ENCODE measurements at regions of chr4 and their contacts with region 1.

Region 1: DNA sequence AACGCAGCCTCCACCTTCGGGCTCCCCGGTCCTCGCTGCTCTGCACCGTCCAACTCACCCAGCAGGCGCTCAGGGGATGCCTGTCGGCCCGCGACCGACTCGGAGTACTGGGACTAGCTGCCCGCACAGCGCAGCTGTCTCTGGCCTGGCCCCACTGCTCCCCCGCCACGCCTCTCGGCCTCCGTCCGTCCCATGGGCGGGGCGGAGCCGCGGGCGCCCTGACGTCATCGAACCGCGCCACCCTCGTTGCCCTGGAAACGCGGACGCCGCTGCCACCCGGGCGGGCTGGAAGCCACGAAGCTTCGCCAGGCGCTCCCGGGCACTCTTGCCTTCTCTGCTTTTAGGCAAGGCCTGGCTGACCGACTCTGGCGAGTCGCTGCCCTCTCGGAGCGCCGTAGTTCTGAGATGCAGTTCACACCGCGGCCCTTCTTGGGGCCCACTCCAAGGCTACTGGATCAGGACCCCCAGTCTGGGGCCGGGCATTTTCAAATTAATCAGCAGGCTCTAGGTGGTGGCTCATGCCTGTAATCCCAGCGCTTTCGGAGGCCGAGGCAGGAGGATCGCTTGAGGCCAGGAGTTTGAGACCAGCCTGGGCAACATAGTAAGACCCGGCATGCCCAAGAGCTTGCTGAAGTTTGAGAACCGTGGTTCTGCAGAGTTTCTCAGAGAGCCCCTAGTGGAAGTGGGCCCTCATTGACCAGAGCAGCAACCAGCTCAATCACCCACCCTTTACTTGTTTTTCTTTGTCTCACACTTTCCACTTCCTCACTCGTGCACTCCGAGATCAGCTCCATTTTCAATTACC is 12.0 kb downstream of the ACOX3 start:
- DNase-seq: peak; percentile 93
- H3K4me3 Mint-ChIP-seq: peak overlapping the region; percentile 95
- H3K27ac Mint-ChIP-seq: peak overlapping the region; percentile 80
- H3K4me1 Mint-ChIP-seq: peaks cover 20% of the 10 kb centered on the region
- H3K27me3 Mint-ChIP-seq: no peaks in the 10 kb centered on the region

Region 2: GRCh38 chr4:8440492-8441341 is 12.2 kb after region 1 on chr4 and contains the starts of genes ACOX3 and TRMT44:
- CTCF ChIA-PET with region 1: interaction called, 27 read pairs
- POLR2A ChIA-PET with region 1: interaction called, 43 read pairs
- DNase-seq: peak; percentile 95
- H3K4me3 Mint-ChIP-seq: peak within 1 kb of the TSS; percentile 99
- H3K27ac Mint-ChIP-seq: peak within 1 kb of the TSS; percentile 99
- H3K4me1 Mint-ChIP-seq: peaks cover 77% of the 10 kb centered on the region
- H3K27me3 Mint-ChIP-seq: no peaks in the 10 kb centered on the region
- total RNA-seq, gene ACOX3: 16.8 to 17.7 TPM
- total RNA-seq, gene TRMT44: 15.7 to 17.8 TPM

Measured in activated CD4-positive, alpha-beta memory T cell treated with anti-CD3 and anti-CD28 coated beads, Interleukin-2, amount 10 ng/mL, durations not matched to agents 7 days and 5 days (primary cell).